Activated T-helper 1 cell treated with anti-CD3 and anti-CD28 coated beads, Interleukin-12 subunit alpha, Interleukin-12 subunit beta, Interleukin-2, Interleukin-4 antibody, amounts not matched to agents 30 ng/mL and 10 ng/mL and 1 ng/mL, durations not matched to agents 14 hours and 24 hours and 36 hours (primary cell): ENCODE measurements at regions of chrX and their contacts with region 1.

Region 1: DNA sequence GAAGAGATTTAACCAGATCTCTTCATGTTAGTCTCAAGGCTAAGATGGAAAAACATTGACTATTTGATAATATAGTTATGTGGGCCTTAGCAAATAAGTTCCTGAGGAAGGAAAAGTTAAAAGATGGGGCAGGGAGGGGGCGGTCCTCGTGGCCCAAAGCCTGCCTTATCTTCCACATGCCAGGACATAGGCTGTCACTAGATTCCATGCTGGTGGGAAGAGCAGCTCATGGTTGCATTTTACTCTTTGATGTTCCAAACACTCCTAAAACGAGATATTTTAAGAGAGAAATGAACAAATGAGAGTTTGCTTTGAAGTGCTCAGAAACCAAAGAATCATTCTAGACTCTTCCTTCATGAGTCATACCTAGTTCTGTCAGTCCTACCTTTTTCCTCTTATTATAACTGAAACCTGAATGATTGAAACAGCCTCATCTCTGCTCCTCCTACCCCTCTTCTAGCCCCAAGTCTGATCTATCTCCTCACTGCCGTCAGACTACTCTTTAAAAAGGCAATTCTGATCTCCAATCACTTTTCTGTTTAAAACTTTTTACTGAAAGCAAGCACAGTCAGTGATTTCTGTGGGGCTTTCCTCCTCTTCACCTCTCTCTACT is 25.1 kb downstream of the RAB9B start:
- DNase-seq: no peak
- H3K4me3 Mint-ChIP-seq: no peak overlapping the region
- H3K27ac Mint-ChIP-seq: no peak overlapping the region
- H3K4me1 Mint-ChIP-seq: peaks cover 12% of the 10 kb centered on the region
- H3K27me3 Mint-ChIP-seq: peaks cover 4% of the 10 kb centered on the region

Region 2: GRCh38 chrX:102863735-102864134 is 943.2 kb before region 1 on chrX:
- intact Hi-C with region 1: no loop called
- DNase-seq: peak; percentile 57
- H3K4me3 Mint-ChIP-seq: no peak overlapping the region
- H3K27ac Mint-ChIP-seq: no peak overlapping the region
- H3K4me1 Mint-ChIP-seq: no peaks in the 10 kb centered on the region
- H3K27me3 Mint-ChIP-seq: no peaks in the 10 kb centered on the region

Region 3: GRCh38 chrX:103794119-103794518 is 12.8 kb before region 1 on chrX:
- intact Hi-C with region 1: loop called (anchors 1 kb)
- DNase-seq: no peak
- H3K4me3 Mint-ChIP-seq: no peak overlapping the region
- H3K27ac Mint-ChIP-seq: no peak overlapping the region
- H3K4me1 Mint-ChIP-seq: no peaks in the 10 kb centered on the region
- H3K27me3 Mint-ChIP-seq: peaks cover 7% of the 10 kb centered on the region